WTC11 (cell line): ENCODE measurements at regions of chr5 and their contacts with region 1.

Region 1: GRCh38 chr5:180718810-180719453 is 20.9 kb downstream of the OR2Y1 start:
- DNase-seq: no peak
- ATAC-seq: no peak
- H3K4me3 Mint-ChIP-seq: no peak overlapping the region
- H3K27ac Mint-ChIP-seq: no peak overlapping the region
- H3K4me1 Mint-ChIP-seq: no peaks in the 10 kb centered on the region
- H3K27me3 Mint-ChIP-seq: no peaks in the 10 kb centered on the region; the same call in 1 of the 2 replicates
- CTCF ChIP-seq: no peak

Region 2: GRCh38 chr5:180605554-180606214 is 113.2 kb before region 1 on chr5:
- CTCF ChIA-PET with region 1: interaction called, 12 read pairs
- POLR2A ChIA-PET with region 1: no interaction called
- DNase-seq: peak; percentile 78
- ATAC-seq: peak; percentile 60
- H3K4me3 Mint-ChIP-seq: no peak overlapping the region
- H3K27ac Mint-ChIP-seq: no peak overlapping the region
- H3K4me1 Mint-ChIP-seq: no peaks in the 10 kb centered on the region
- H3K27me3 Mint-ChIP-seq: no peaks in the 10 kb centered on the region
- CTCF ChIP-seq: peak; percentile 85

Region 3: GRCh38 chr5:180648641-180649296 is 70.2 kb before region 1 on chr5:
- CTCF ChIA-PET with region 1: interaction called, 18 read pairs
- POLR2A ChIA-PET with region 1: no interaction called
- DNase-seq: peak; percentile 75
- ATAC-seq: peak; percentile 74
- H3K4me3 Mint-ChIP-seq: peak overlapping the region; percentile 74
- H3K27ac Mint-ChIP-seq: no peak overlapping the region
- H3K4me1 Mint-ChIP-seq: peaks cover 9% of the 10 kb centered on the region
- H3K27me3 Mint-ChIP-seq: peaks cover 52% of the 10 kb centered on the region
- CTCF ChIP-seq: 0 out of 2 replicates have a peak, but pooled peaks have one; percentile 12

Region 4: GRCh38 chr5:180683220-180683922 is 35.6 kb before region 1 on chr5:
- CTCF ChIA-PET with region 1: interaction called, 11 read pairs
- POLR2A ChIA-PET with region 1: interaction called, 3 read pairs
- DNase-seq: no peak
- ATAC-seq: no peak
- H3K4me3 Mint-ChIP-seq: no peak overlapping the region
- H3K27ac Mint-ChIP-seq: no peak overlapping the region
- H3K4me1 Mint-ChIP-seq: peaks cover 15% of the 10 kb centered on the region
- H3K27me3 Mint-ChIP-seq: peaks cover 4% of the 10 kb centered on the region; the same call in 1 of the 2 replicates
- CTCF ChIP-seq: no peak

Region 5: GRCh38 chr5:180704368-180704869 is 14.5 kb before region 1 on chr5:
- CTCF ChIA-PET with region 1: interaction called, 18 read pairs
- POLR2A ChIA-PET with region 1: no interaction called
- DNase-seq: no peak
- ATAC-seq: no peak
- H3K4me3 Mint-ChIP-seq: no peak overlapping the region
- H3K27ac Mint-ChIP-seq: no peak overlapping the region
- H3K4me1 Mint-ChIP-seq: peaks cover 12% of the 10 kb centered on the region
- H3K27me3 Mint-ChIP-seq: no peaks in the 10 kb centered on the region; the same call in 1 of the 2 replicates
- CTCF ChIP-seq: no peak